ENCODE measurements at regions of chr3 and their contacts with region 1.

Region 1: DNA sequence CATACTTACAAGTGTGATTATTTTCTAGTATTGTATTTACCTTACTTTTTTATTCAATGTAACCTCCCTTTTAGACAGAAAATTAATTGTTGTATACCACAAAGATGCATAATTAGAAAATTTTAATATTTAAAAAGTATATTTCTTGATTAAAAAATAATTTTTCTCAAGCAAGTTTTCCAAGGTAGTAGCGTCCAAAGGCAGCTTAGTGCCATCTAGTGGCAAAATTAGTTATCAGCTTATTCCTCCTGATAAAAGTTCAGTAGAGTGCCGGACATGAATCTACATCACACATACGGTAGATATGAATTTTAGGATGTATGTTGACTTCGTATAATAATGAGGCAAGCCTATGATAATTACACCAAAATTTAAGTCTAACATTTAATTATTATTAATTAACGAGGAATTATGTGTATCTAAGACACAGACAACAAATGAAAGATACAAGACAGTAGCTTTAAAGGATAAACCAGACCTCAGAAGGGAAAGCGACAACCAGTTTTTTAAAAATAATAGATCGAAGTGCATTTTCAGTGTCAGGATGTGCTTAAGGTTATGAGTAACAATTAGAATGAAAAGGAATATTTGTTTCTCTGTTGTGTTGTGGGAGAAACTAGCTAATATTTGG is 405.9 kb downstream of the ROBO1 start:
- DNase-seq: peak; percentile 18 to 59
- H3K4me3 ChIP-seq: no peak overlapping the region
- H3K4me1 ChIP-seq: 0 out of 2 replicates have a peak, but pooled peaks cover 2% of the 10 kb centered on the region
- H3K27me3 ChIP-seq: peaks cover 5% of the 10 kb centered on the region

Region 2: DNA sequence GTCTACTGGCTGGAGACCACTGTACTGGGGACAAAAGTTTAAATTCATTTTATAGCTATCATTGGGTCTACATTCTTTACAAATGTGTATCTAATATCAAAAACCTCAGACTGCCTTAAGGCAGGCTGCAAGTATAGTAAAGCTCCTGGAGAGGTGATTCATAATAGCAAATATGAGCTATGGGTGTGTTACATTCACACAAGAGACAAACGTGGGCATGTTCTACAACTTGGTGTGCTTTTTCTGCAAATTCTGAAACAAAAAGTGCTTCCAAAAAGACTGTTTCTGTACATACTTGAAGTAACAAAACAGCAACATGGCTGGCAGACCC is 695.4 kb before region 1 on chr3:
- in situ Hi-C with region 1: loop called (anchors 10 kb)
- DNase-seq: no peak
- H3K4me3 ChIP-seq: no peak overlapping the region
- H3K4me1 ChIP-seq: peaks cover 15% of the 10 kb centered on the region
- H3K27me3 ChIP-seq: no peaks in the 10 kb centered on the region

Region 3: DNA sequence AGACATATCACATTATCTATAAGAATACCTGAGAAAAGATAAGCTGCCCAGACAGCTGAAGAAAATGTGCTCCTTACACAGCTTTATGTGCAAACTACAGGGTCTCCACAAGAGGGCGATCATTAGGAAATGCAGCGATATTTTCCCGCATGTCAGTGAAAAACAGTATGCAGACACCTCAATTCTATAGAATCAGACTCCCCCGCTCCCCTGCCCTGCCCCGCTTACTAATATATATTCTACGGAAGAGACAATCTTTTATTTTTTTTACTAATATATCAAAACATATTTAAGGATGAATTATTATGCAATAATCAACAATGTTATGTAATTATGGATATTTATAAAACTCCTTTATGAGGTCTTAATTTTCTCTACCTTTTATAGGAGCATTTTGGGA is 275.3 kb before region 1 on chr3:
- in situ Hi-C with region 1: loop called (anchors 25 kb)
- DNase-seq: peak; percentile 77 to 79
- H3K4me3 ChIP-seq: no peak overlapping the region
- H3K4me1 ChIP-seq: 0 out of 2 replicates have a peak, but pooled peaks cover 3% of the 10 kb centered on the region
- H3K27me3 ChIP-seq: no peaks in the 10 kb centered on the region

Measured in HAP-1 (cell line).